ENCODE measurements at regions of chr1 and their contacts with region 1.

Region 1: GRCh38 chr1:206507284-206508129 is at the start of gene RASSF5:
- DNase-seq: peak; percentile 90
- ATAC-seq: peak; percentile 78
- H3K4me3 Mint-ChIP-seq: peak within 1 kb of the TSS; percentile 63
- H3K27ac Mint-ChIP-seq: peak within 1 kb of the TSS; percentile 49
- H3K4me1 Mint-ChIP-seq: peaks cover 47% of the 10 kb centered on the region
- H3K27me3 Mint-ChIP-seq: peaks cover 31% of the 10 kb centered on the region
- total RNA-seq, gene RASSF5: 223 to 239 TPM

Region 2: GRCh38 chr1:206469933-206470691 is 37.4 kb before region 1 on chr1 and contains the start of gene IKBKE:
- CTCF ChIA-PET with region 1: interaction called, 6 read pairs
- POLR2A ChIA-PET with region 1: no interaction called
- intact Hi-C with region 1: loop called (anchors 2 kb)
- DNase-seq: peak; percentile 74
- ATAC-seq: peak; percentile 53
- H3K4me3 Mint-ChIP-seq: peak within 1 kb of the TSS; percentile 83
- H3K27ac Mint-ChIP-seq: peak within 1 kb of the TSS; percentile 91
- H3K4me1 Mint-ChIP-seq: peaks cover 92% of the 10 kb centered on the region
- H3K27me3 Mint-ChIP-seq: no peaks in the 10 kb centered on the region
- total RNA-seq, gene IKBKE: 15.3 to 17.2 TPM

Region 3: GRCh38 chr1:206521143-206521542 is 13.6 kb after region 1 on chr1:
- CTCF ChIA-PET with region 1: interaction called, 3 read pairs
- POLR2A ChIA-PET with region 1: no interaction called
- intact Hi-C with region 1: loop called in 1 of 2 experiments (anchors 1 kb)
- DNase-seq: no peak
- ATAC-seq: no peak
- H3K4me3 Mint-ChIP-seq: no peak overlapping the region
- H3K27ac Mint-ChIP-seq: no peak overlapping the region
- H3K4me1 Mint-ChIP-seq: peaks cover 3% of the 10 kb centered on the region
- H3K27me3 Mint-ChIP-seq: no peaks in the 10 kb centered on the region

Region 4: GRCh38 chr1:206590025-206590758 is 82.7 kb after region 1 on chr1:
- CTCF ChIA-PET with region 1: interaction called, 4 read pairs
- POLR2A ChIA-PET with region 1: interaction called, 3 read pairs
- intact Hi-C with region 1: loop called in 1 of 2 experiments (anchors 1 kb)
- DNase-seq: peak; percentile 81
- ATAC-seq: peak; percentile 94
- H3K4me3 Mint-ChIP-seq: peak overlapping the region; percentile 59
- H3K27ac Mint-ChIP-seq: peak overlapping the region; percentile 98
- H3K4me1 Mint-ChIP-seq: peaks cover 65% of the 10 kb centered on the region
- H3K27me3 Mint-ChIP-seq: no peaks in the 10 kb centered on the region

Region 5: GRCh38 chr1:206635080-206635977 is 127.8 kb after region 1 on chr1 and contains the start of gene DYRK3:
- CTCF ChIA-PET with region 1: interaction called, 4 read pairs
- POLR2A ChIA-PET with region 1: no interaction called
- intact Hi-C with region 1: loop called in 1 of 2 experiments (anchors 1 kb)
- DNase-seq: peak; percentile 97
- ATAC-seq: peak; percentile 93
- H3K4me3 Mint-ChIP-seq: peak within 1 kb of the TSS; percentile 76
- H3K27ac Mint-ChIP-seq: peak within 1 kb of the TSS; percentile 87
- H3K4me1 Mint-ChIP-seq: peaks cover 27% of the 10 kb centered on the region
- H3K27me3 Mint-ChIP-seq: peaks cover 7% of the 10 kb centered on the region
- total RNA-seq, gene DYRK3: 8.3 to 8.7 TPM

Region 6: GRCh38 chr1:206803221-206803730 is 295.8 kb after region 1 on chr1:
- CTCF ChIA-PET with region 1: no interaction called
- POLR2A ChIA-PET with region 1: no interaction called
- intact Hi-C with region 1: loop called in 1 of 2 experiments (anchors 1 kb)
- DNase-seq: peak; percentile 87
- ATAC-seq: peak; percentile 91
- H3K4me3 Mint-ChIP-seq: peak overlapping the region; percentile 0
- H3K27ac Mint-ChIP-seq: peak overlapping the region; percentile 77
- H3K4me1 Mint-ChIP-seq: peaks cover 67% of the 10 kb centered on the region
- H3K27me3 Mint-ChIP-seq: peaks cover 21% of the 10 kb centered on the region

Measured in activated CD4-positive, alpha-beta T cell treated with anti-CD3 and anti-CD28 coated beads for 36 hours (primary cell).